ENCODE measurements at regions of chr13 and their contacts with region 1.

Region 1: GRCh38 chr13:40306817-40307216 is 359.6 kb downstream of the FOXO1 start:
- DNase-seq: no peak
- H3K4me3 ChIP-seq: no peak overlapping the region
- H3K4me3 Mint-ChIP-seq: no peak overlapping the region
- H3K27ac Mint-ChIP-seq: no peak overlapping the region
- H3K4me1 ChIP-seq: peaks cover 10% of the 10 kb centered on the region
- H3K4me1 Mint-ChIP-seq: peaks cover 18% of the 10 kb centered on the region
- H3K27me3 ChIP-seq: no peaks in the 10 kb centered on the region
- H3K27me3 Mint-ChIP-seq: no peaks in the 10 kb centered on the region
- CTCF ChIP-seq: no peak

Region 2: DNA sequence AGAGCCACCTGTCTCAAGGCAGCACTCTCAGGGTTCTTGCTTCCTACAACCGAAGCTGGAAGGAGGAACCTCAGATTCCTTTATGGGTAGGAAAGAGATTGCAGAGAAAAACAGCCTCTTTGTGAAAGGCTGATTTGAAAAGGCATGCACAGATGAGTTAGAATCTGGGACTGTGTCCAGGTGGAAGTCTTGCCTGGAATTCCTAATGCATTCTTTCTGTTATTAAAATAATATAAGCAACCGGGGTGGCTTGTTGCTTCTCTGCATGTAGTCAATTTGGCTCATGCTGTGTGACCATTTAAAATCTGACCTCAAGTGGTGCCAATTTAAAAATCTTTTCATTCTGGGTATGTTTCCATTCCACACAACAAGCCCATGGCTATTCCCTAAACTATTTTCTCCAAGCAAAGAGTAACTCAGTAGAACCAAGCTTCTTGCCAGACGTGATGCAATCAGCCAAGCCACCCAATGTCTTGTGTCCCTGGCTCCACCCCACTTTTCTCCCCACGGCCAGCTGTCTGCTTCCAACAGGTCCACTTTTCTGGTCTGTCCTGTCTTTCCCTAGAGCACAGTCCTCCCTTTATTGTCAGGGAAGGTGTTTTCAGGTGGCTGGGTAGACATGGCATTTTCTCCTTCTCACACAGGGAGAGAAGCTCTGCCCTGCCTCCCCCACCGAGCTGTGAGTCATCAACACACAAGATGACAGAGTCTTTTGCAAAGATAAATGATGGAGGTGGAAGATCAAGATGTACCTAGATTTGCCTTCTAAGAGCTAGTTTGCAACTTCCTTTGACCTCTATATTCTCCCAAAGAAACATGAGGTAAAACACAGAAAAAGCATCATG is 34.7 kb before region 1 on chr13:
- CTCF ChIA-PET with region 1: no interaction called
- POLR2A ChIA-PET with region 1: no interaction called
- intact Hi-C with region 1: no loop called
- DNase-seq: no peak
- H3K4me3 ChIP-seq: no peak overlapping the region
- H3K4me3 Mint-ChIP-seq: no peak overlapping the region
- H3K27ac Mint-ChIP-seq: no peak overlapping the region
- H3K4me1 ChIP-seq: no peaks in the 10 kb centered on the region
- H3K4me1 Mint-ChIP-seq: no peaks in the 10 kb centered on the region
- H3K27me3 ChIP-seq: no peaks in the 10 kb centered on the region
- H3K27me3 Mint-ChIP-seq: no peaks in the 10 kb centered on the region
- CTCF ChIP-seq: no peak

Region 3: GRCh38 chr13:40344270-40345148 is 37.7 kb after region 1 on chr13:
- CTCF ChIA-PET with region 1: interaction called, 12 read pairs
- POLR2A ChIA-PET with region 1: no interaction called
- intact Hi-C with region 1: no loop called
- DNase-seq: no peak
- H3K4me3 ChIP-seq: no peak overlapping the region
- H3K4me3 Mint-ChIP-seq: no peak overlapping the region
- H3K27ac Mint-ChIP-seq: peak overlapping the region; percentile 26
- H3K4me1 ChIP-seq: peaks cover 46% of the 10 kb centered on the region
- H3K4me1 Mint-ChIP-seq: peaks cover 56% of the 10 kb centered on the region
- H3K27me3 ChIP-seq: no peaks in the 10 kb centered on the region
- H3K27me3 Mint-ChIP-seq: no peaks in the 10 kb centered on the region
- CTCF ChIP-seq: no peak